ENCODE measurements at regions of chr3 and their contacts with region 1.

Region 1: DNA sequence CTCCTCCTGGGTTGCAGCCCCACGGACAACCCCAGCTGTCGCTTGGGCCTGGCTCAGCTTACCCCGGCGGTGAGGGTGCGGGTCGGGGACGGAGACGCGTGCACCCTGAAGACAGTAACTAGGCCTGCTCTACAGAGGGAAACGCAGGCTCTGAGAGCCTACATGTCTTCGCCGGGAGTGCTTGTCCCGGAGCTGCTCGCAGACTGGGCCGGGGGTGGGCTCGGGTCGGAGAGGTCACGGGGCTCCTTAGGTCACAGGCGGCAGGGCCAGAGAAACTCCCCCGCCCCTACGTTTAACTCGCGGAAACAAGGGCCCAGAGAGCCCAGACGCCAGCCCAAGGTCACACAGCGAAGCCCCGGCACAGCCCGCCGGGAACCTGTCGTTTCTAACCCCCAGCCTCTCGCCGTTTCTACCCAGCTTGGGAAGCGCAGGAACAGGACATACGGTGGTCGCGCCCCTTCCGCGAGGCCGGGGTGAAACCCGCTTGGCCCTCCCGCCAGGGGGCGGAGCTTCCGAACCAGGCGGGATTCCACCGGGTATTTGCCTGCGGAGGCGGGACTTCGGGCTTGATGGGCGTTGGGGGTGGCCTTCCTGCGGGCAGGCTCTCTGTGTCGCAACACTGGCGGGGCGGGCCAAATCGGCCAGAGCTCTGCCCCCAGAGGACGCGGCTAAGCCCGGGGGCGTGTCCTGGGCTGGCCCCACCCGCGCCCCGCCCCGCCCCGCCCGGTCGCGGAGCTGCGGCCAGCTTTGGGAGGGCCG is at the start of gene HDAC11:
- DNase-seq: peak; percentile 100
- CTCF ChIP-seq: peak; percentile 6

Region 2: GRCh38 chr3:13461169-13462158 is 18.3 kb before region 1 on chr3:
- CTCF ChIA-PET with region 1: interaction called, 10 read pairs
- POLR2A ChIA-PET with region 1: no interaction called
- DNase-seq: peak; percentile 73
- CTCF ChIP-seq: peak; percentile 59

Region 3: DNA sequence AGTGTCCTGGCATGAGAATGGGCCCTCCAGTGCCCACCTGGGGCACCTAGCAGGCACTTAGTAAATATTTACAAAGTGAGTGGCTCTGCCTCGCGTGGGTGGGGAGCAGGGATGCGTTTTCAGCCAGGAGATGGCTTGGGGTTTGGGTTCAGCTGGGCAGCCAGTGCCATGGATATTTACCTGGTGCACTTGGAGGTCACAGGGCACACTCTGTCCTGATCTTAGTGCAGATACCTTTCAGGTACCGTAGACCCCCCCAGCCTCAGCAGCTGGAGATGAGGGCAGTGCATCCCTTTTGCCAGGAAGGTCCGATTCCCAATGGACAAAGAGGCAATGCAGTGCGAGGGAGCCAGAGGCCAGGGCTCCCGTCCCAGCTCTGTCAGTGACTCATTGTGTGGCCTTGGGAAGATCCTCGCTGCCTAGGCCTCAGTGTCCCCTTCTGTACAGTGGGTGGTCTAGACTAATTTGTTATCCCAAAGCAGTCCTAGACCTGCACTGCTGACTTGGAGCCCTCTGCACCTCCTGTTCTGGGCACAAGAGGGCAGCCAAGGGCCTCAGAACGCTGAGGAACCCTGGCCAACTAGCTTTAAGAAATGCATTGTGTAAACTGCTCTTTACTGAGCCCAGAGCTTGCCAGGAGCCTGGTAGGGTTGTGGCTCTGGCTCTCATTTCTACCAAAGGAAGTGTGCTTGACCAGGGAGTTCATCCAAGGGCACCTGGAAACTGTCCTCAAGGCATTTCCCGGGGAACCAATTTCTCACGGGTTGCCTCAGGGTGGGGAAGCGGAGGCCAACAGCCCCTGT is 16.4 kb after region 1 on chr3:
- CTCF ChIA-PET with region 1: interaction called, 31 read pairs
- POLR2A ChIA-PET with region 1: no interaction called
- DNase-seq: peak; percentile 77
- CTCF ChIP-seq: peak; percentile 97

Measured in GM10248 (cell line).